HEK293T (cell line): ENCODE measurements at regions of chr14 and their contacts with region 1.

Region 1: DNA sequence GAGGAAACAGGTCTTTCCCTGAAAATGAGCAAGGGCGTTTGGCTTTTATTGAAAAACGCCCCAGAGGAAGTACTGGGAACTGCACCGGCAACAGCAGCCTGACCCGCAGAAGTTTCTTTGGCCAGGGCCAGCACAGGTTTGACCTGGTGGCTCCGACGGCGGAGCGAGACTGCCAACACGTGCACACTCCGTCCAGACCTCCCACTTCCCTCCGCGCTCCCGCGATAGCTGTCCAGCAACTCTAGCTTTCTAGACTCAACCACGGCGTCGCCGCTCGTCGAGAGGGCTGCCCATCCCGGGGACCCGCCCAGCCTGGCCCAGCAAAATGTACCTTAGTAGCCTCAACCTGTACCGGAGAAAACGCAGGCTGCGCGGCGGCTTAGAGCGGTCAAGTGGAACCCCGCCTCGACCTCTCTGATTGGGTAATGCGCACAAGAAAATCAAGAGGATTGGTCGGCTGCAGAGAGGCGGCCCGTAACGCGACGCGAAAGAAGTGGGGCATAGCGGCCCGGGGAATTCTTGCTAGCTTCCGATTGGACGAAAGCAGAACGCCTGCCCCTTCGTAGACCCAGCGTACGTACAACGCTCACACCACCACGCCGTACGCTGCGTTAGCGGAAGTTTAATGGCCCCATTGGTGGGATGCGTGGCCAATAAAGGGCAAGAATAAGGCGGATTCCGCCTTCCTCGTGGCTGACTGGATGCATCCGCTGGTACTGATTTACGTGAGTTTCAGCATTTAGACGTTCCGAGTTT is at the start of gene WDR89:
- DNase-seq: peak; percentile 92

Region 2: DNA sequence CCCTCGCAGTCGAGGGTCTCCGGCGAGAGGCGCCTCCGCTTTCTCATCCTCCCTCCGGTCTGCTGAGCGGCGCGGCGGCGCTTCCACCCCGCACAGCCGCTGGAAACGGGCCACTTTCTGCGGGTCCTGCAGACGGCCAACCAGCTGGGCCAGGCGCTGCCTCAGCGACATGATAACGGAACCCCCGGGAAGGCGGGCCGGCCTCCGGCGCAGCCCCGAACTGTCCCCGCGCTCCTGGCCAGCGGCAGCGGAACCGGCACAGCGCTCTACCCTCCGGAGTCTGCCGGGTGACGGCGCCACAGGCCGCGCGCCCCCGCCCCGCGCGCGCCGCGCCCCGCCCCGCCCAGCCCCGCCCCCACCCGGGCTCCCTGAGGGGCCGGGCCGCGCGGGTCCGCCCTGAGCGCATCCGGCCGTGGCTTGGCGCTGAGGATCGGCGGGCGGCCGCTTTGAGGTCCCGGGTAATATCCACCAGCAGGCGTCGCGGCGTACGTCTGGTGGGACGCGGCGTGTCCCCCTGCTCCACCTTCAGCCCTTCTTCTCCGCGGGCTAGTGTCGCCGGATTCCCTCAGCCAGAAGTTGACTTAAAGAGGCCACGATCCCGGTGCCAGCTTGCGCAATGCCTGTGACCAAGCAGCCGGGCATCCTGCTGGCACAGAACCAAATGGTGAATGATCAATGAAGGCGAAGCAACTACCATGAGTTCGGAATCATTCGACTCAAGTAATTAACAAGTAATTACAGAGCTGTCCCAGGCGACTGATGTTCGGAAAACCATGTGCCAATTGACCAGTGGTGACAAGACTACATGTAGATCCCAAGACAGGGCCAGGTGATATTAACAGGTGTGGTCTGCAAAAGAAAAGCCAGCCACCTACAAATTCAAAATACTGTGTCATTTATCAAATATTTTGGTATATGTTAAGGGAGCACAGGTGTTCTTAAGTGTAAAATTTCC is 86.4 kb after region 1 on chr14 and contains the start of gene SGPP1:
- CTCF ChIA-PET with region 1: interaction called, 6 read pairs
- POLR2A ChIA-PET with region 1: interaction called, 25 read pairs
- DNase-seq: peak; percentile 84